Right ventricle myocardium superior (tissue), 1 donor: ENCODE measurements at regions of chr9 and their contacts with region 1.

Region 1: GRCh38 chr9:73104342-73104741 is 47.3 kb upstream of the ANXA1 start:
- DNase-seq: no peak
- ATAC-seq: no peak

Region 2: GRCh38 chr9:72912476-72913381 is 191.6 kb before region 1 on chr9:
- intact Hi-C with region 1: no loop called
- DNase-seq: no peak
- ATAC-seq: peak; percentile 80

Region 3: GRCh38 chr9:73183917-73184861 is 79.8 kb after region 1 on chr9:
- intact Hi-C with region 1: loop called (anchors 2 kb)
- DNase-seq: no peak
- ATAC-seq: no peak